BJ (cell line): ENCODE measurements at regions of chr9 and their contacts with region 1.

Region 1: GRCh38 chr9:3682186-3682585 is 156.4 kb upstream of the RFX3 start:
- DNase-seq: peak; percentile 7
- H3K4me3 ChIP-seq: no peak overlapping the region
- H3K27me3 ChIP-seq: no peaks in the 10 kb centered on the region
- CTCF ChIP-seq: no peak

Region 2: DNA sequence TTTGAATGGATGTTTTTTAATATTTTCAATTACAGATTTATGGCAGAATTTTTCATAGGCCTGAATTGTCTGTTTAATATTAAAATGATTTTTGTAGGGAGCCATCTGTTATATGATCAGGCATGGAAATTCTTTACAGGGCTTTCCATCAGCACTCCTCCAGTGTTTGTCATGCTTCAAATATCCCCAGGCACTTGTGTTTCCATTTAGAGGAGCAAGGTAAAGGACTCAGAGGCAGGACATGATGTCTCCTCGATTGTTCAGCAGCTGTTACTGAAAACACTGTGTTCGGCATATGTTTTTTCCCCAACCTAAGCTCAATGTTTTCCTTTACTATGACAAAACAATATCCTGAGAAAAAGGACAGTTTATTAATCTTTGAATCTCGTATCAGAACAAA is 15.9 kb after region 1 on chr9:
- CTCF ChIA-PET with region 1: no interaction called
- POLR2A ChIA-PET with region 1: no interaction called
- DNase-seq: no peak
- H3K4me3 ChIP-seq: no peak overlapping the region
- H3K27me3 ChIP-seq: peaks cover 2% of the 10 kb centered on the region; the same call in 1 of the 2 replicates
- CTCF ChIP-seq: no peak

Region 3: GRCh38 chr9:3783156-3783555 is 101.0 kb after region 1 on chr9:
- CTCF ChIA-PET with region 1: no interaction called
- POLR2A ChIA-PET with region 1: no interaction called
- DNase-seq: no peak
- H3K4me3 ChIP-seq: no peak overlapping the region
- H3K27me3 ChIP-seq: no peaks in the 10 kb centered on the region; the same call in 1 of the 2 replicates
- CTCF ChIP-seq: no peak

Region 4: GRCh38 chr9:4048441-4048840 is 366.3 kb after region 1 on chr9:
- CTCF ChIA-PET with region 1: no interaction called
- POLR2A ChIA-PET with region 1: interaction called, 10 read pairs
- DNase-seq: peak; percentile 1
- H3K4me3 ChIP-seq: no peak overlapping the region
- H3K27me3 ChIP-seq: no peaks in the 10 kb centered on the region
- CTCF ChIP-seq: peak; percentile 70